ENCODE measurements at regions of chr6 and their contacts with region 1.

Region 1: GRCh38 chr6:28940858-28941680 is 17.3 kb upstream of the TRIM27 start:
- DNase-seq: peak; percentile 96
- H3K4me3 ChIP-seq: peak overlapping the region; percentile 46 to 89 (median 87)
- H3K27ac ChIP-seq: peak overlapping the region; percentile 67
- H3K4me1 ChIP-seq: peaks cover 11% of the 10 kb centered on the region
- H3K27me3 ChIP-seq: no peaks in the 10 kb centered on the region
- CTCF ChIP-seq: no peak
- POLR2A ChIP-seq: no peak

Region 2: DNA sequence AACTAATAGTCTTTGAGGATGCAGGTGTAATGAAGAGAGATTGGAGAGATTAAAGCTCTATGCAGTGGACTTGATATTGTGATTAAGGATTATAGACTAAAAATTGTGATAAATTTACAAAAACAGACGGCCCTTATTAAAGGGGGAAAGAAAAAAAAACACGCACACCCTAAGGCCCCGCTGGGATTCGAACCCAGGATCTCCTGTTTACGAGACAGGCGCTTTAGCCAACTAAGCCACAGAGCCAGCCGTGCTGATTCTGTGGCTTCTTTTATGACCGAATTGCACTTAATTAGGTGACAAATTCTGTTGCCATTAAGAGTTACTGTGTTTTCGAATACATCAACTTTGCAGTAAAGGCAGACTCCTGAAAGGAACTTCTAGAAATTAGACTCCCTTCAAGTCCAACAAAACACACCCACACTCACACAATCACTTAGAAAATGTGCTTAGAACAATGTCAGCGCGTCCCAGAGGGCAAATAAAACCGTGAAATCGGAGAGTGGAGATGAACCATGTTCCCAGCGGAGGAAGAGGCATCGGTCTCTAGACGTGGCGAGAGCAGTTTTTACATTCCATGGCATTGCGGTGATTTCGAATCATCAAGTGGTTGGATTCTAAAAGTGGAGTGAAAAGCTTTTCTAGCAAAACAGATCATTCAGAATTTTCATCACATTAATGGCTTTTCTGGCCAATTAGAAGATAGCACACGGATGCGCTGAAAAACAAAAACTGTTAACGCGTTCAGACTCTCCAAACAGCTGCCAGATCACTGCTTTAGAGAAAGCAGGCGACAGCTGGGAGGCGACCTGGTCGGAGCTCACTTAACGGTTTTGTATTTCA is 292.8 kb before region 1 on chr6:
- CTCF ChIA-PET with region 1: no interaction called
- POLR2A ChIA-PET with region 1: no interaction called
- dilution Hi-C with region 1: no loop called
- intact Hi-C with region 1: loop called (anchors 5 kb)
- DNase-seq: peak; percentile 86
- H3K4me3 ChIP-seq: peak overlapping the region; percentile 47 to 97 (median 70)
- H3K27ac ChIP-seq: peak overlapping the region; percentile 14
- H3K4me1 ChIP-seq: peaks cover 3% of the 10 kb centered on the region
- H3K27me3 ChIP-seq: peaks cover 7 to 20% of the 10 kb centered on the region in 2 experiments
- CTCF ChIP-seq: no peak
- POLR2A ChIP-seq: no peak

Region 3: GRCh38 chr6:28725890-28726348 is 215.2 kb before region 1 on chr6:
- CTCF ChIA-PET with region 1: interaction called, 4 read pairs
- POLR2A ChIA-PET with region 1: no interaction called
- dilution Hi-C with region 1: no loop called
- intact Hi-C with region 1: loop called (anchors 2 kb)
- DNase-seq: no peak
- H3K4me3 ChIP-seq: no peak overlapping the region
- H3K27ac ChIP-seq: no peak overlapping the region
- H3K4me1 ChIP-seq: peaks cover 4% of the 10 kb centered on the region
- H3K27me3 ChIP-seq: peaks cover 9 to 12% of the 10 kb centered on the region in 2 experiments
- CTCF ChIP-seq: no peak
- POLR2A ChIP-seq: no peak

Region 4: GRCh38 chr6:28863604-28864320 is 77.3 kb before region 1 on chr6:
- CTCF ChIA-PET with region 1: no interaction called
- POLR2A ChIA-PET with region 1: no interaction called
- dilution Hi-C with region 1: no loop called
- intact Hi-C with region 1: loop called (anchors 1 kb)
- DNase-seq: peak; percentile 91
- H3K4me3 ChIP-seq: peak overlapping the region; percentile 64 to 91 (median 83)
- H3K27ac ChIP-seq: peak overlapping the region; percentile 9
- H3K4me1 ChIP-seq: peaks cover 16% of the 10 kb centered on the region
- H3K27me3 ChIP-seq: peaks cover 5% of the 10 kb centered on the region in 2 experiments
- CTCF ChIP-seq: no peak
- POLR2A ChIP-seq: no peak

Region 5: GRCh38 chr6:28923318-28924102 is 17.6 kb before region 1 on chr6 and contains the start of gene TRIM27:
- CTCF ChIA-PET with region 1: interaction called, 8 read pairs
- POLR2A ChIA-PET with region 1: interaction called, 9 read pairs
- dilution Hi-C with region 1: no loop called
- intact Hi-C with region 1: loop called (anchors 1 kb)
- DNase-seq: peak; percentile 85
- H3K4me3 ChIP-seq: peak within 1 kb of the TSS; percentile 55 to 90 (median 63)
- H3K27ac ChIP-seq: peak within 1 kb of the TSS; percentile 77
- H3K4me1 ChIP-seq: peaks cover 18% of the 10 kb centered on the region
- H3K27me3 ChIP-seq: no peaks in the 10 kb centered on the region
- CTCF ChIP-seq: no peak
- POLR2A ChIP-seq: peak; percentile 95
- total RNA-seq, gene TRIM27: 67.5 and 69.2 TPM in 2 replicates

Region 6: GRCh38 chr6:28981833-28982475 is 40.9 kb after region 1 on chr6:
- CTCF ChIA-PET with region 1: interaction called, 10 read pairs
- POLR2A ChIA-PET with region 1: no interaction called
- dilution Hi-C with region 1: no loop called
- intact Hi-C with region 1: loop called (anchors 1 kb)
- DNase-seq: peak; percentile 94
- H3K4me3 ChIP-seq: peak overlapping the region; percentile 44 to 82 (median 60)
- H3K27ac ChIP-seq: peak overlapping the region; percentile 42
- H3K4me1 ChIP-seq: peaks cover 25% of the 10 kb centered on the region
- H3K27me3 ChIP-seq: no peaks in the 10 kb centered on the region
- CTCF ChIP-seq: no peak
- POLR2A ChIP-seq: no peak

Region 7: DNA sequence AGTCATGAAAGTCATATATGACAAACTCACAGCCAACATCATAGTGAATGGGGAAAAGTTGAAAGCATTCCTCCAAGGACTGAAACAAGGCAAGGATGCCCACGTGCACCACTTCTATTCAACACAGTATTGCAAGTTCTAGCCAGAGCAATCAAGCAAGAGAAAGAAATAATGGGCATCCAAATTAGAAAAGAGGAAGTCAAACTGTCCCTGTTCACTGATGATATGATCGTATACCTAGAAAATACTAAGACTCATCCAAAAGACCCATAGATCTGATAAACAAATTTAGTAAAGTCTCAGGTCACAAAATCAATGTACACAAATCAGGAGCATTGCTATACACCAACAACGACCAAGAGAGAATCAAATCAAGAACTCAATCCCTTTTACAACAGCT is 1445.1 kb after region 1 on chr6:
- CTCF ChIA-PET with region 1: no interaction called
- POLR2A ChIA-PET with region 1: no interaction called
- dilution Hi-C with region 1: no loop called
- intact Hi-C with region 1: no loop called
- DNase-seq: no peak
- H3K4me3 ChIP-seq: no peak overlapping the region
- H3K27ac ChIP-seq: no peak overlapping the region
- H3K4me1 ChIP-seq: no peaks in the 10 kb centered on the region
- H3K27me3 ChIP-seq: peaks cover 12 to 19% of the 10 kb centered on the region in 2 experiments
- CTCF ChIP-seq: no peak
- POLR2A ChIP-seq: no peak

Measured in endothelial cell of umbilical vein (primary cell).